ENCODE measurements at regions of chr21 and their contacts with region 1.

Region 1: GRCh38 chr21:45973659-45974072 is 7.9 kb upstream of the COL6A1 start:
- H3K4me3 ChIP-seq: peak overlapping the region; percentile 24
- H3K27ac ChIP-seq: peak overlapping the region; percentile 73
- H3K4me1 ChIP-seq: peaks cover 23% of the 10 kb centered on the region
- CTCF ChIP-seq: peak; percentile 78

Region 2: GRCh38 chr21:45749974-45750373 is 223.7 kb before region 1 on chr21:
- CTCF ChIA-PET with region 1: no interaction called
- POLR2A ChIA-PET with region 1: no interaction called
- H3K4me3 ChIP-seq: no peak overlapping the region
- H3K27ac ChIP-seq: no peak overlapping the region
- H3K4me1 ChIP-seq: peaks cover 5% of the 10 kb centered on the region; the same call in 1 of the 2 replicates
- CTCF ChIP-seq: no peak

Region 3: GRCh38 chr21:45954261-45954660 is 19.4 kb before region 1 on chr21:
- CTCF ChIA-PET with region 1: interaction called, 14 read pairs
- POLR2A ChIA-PET with region 1: interaction called, 4 read pairs
- H3K4me3 ChIP-seq: no peak overlapping the region
- H3K27ac ChIP-seq: no peak overlapping the region
- H3K4me1 ChIP-seq: peaks cover 5% of the 10 kb centered on the region
- CTCF ChIP-seq: no peak

Region 4: DNA sequence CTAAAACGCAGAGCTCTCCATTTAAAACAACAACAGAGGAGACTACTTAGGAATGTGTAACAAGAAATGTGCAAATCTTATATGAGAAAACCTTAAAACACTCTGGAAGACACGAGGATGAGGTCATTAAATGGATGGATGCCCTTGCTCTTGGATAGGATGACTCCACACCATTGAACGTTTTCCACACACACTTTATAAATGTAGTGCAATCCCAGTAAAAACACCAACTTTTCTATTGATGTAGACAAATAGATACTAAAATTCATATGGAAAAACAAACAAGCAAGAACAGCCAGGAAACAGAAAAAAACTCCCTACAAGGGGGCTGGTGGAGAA is 10.5 kb before region 1 on chr21:
- CTCF ChIA-PET with region 1: interaction called, 14 read pairs
- POLR2A ChIA-PET with region 1: no interaction called
- H3K4me3 ChIP-seq: no peak overlapping the region
- H3K27ac ChIP-seq: no peak overlapping the region
- H3K4me1 ChIP-seq: no peaks in the 10 kb centered on the region
- CTCF ChIP-seq: no peak